ENCODE measurements at regions of chr1 and their contacts with region 1.

Region 1: DNA sequence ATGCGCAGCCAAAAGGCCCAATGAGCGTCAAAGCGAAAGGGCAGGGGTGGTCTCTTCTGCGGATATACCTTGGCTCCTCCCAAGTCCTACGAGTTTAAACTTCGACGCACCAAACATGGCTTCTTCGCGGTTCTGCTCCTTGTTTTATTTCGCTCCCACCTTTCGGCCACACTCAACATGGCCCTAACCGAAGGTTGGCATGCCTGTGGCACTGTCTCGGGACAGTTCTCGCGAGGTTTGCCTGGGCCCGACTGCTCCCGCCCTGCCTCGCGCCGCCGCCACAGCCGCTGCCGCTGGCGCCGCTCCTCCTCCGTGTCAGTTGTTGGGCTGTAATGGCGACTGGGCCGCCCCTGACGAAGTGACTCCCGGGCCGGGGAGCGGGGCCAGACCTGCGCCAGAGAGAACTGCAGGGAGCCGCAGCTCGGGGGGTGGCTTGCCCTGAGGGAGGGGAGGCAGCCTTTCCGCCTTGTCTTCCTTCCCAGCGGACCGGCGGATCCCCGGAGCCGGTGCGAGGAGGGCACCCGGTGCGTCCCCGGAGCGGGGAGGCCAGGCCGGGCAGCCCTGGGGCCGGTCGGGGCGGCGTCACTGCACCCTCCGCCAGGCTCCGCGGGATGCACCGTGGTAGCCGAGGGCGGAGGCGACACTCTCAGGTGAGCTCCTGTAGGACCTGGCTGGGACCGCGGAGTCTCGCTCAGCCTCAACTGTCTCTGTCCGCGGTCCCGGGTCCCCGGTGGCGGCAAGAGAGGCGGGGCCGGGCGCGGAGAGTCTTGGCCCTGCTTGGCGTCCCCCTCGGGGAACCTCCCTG is at the start of gene CEP350:
- DNase-seq: peak; percentile 97 to 98
- ATAC-seq: peak; percentile 93 to 94
- H3K4me3 ChIP-seq: peak within 1 kb of the TSS; percentile 75 to 97 (median 92)
- H3K27ac ChIP-seq: peak within 1 kb of the TSS; percentile 93 to 98 (median 97)
- H3K4me1 ChIP-seq: peaks cover 17 to 38% of the 10 kb centered on the region in 2 donors
- H3K27me3 ChIP-seq: no peaks in the 10 kb centered on the region
- CTCF ChIP-seq: peak in 2 of 5 experiments; percentile 13 to 19
- POLR2A ChIP-seq: peak; percentile 87 to 92
- total RNA-seq, gene CEP350: 83.7 to 197 (median 157) TPM

Region 2: DNA sequence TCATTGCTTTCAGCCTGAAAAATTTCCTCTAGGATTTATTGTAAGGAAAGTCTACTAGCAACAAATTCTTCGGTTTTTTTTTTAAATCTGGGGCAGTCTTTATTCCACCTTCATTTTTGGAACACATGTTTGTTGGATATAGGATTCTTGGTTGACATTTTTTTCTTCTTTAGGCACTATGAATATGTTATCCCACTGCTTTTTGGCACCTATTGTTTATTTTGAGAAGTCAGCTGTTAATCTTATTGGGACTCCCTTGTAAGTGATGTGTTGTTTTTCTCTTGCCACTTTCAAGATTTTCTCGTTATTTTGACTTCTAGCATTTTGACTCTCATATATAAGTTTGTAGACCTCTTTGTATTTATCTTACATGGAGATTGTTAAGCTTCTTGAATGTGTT is 478.2 kb before region 1 on chr1:
- in situ Hi-C with region 1: no loop called
- intact Hi-C with region 1: no loop called
- DNase-seq: no peak
- ATAC-seq: no peak
- H3K4me3 ChIP-seq: no peak overlapping the region
- H3K27ac ChIP-seq: no peak overlapping the region
- H3K4me1 ChIP-seq: no peaks in the 10 kb centered on the region
- H3K27me3 ChIP-seq: no peaks in the 10 kb centered on the region
- CTCF ChIP-seq: no peak
- POLR2A ChIP-seq: no peak

Region 3: DNA sequence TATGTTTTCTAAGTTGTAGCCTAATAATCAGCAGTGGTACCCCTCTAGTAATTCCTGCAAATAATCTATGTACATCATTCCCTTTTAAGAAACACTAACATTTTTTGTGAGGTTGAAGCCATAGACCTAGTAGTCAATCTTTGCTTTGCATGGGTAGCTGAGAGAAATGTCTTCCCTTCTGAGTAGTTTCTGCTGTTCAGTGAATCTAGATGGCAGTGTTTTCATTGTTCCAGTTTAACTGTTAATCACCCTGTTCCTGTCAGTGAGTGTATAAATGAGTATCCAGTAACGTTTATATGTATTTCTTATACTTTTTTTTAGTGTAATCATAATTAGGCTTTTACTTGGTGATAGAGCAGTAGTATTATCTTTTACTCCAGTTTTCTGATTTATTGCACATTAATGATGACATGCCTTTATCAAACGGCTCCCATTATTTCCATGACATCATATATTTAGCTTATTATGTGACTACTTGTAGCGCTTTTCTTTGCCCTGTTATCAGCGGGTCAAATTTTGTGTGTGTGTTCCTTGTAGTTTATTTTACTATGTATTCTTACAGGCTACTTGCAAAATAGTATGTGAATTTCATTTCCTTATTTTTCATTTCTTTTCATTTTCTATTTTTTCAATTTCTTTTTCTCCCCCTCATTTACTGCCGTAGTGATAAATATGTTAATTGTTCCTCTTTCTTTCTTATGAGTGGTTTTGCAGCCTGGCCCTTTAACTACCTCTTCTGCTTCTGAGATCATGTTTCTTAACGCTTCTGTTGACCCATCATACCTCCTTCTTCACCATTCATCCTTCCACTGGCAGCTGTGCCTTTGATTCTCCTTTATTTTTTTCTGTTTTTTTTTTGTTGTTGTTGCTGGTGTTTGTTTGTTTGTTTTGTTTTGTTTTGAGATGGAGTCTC is 18.8 kb after region 1 on chr1:
- in situ Hi-C with region 1: no loop called
- intact Hi-C with region 1: loop called (anchors 2 kb)
- DNase-seq: no peak
- ATAC-seq: no peak
- H3K4me3 ChIP-seq: peak overlapping the region in 3 of 4 donors; percentile 25 to 38 (median 30)
- H3K27ac ChIP-seq: peak overlapping the region; percentile 79 to 89 (median 87)
- H3K4me1 ChIP-seq: peaks cover 60 to 75% of the 10 kb centered on the region in 2 donors
- H3K27me3 ChIP-seq: no peaks in the 10 kb centered on the region
- CTCF ChIP-seq: no peak
- POLR2A ChIP-seq: no peak

Region 4: DNA sequence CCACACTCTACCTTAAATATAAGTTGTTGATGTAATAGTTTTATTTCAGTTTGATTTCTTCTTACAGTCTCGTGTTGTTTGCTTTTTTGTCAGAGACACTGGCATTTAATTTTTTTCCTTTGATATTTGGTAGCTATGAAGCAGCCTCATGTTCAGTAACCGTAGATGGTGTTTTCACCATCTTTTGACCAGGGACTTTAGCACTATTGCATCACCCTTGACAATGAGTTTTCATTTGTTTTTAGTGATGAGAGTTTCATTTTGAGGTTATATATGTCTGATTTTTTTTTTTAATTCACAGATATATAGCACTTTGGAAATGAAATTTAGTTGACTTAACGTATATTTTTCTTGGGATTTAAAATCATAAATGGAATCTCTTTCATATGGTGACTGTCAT is 36.2 kb after region 1 on chr1:
- in situ Hi-C with region 1: no loop called
- intact Hi-C with region 1: no loop called
- DNase-seq: no peak
- ATAC-seq: no peak
- H3K4me3 ChIP-seq: no peak overlapping the region
- H3K27ac ChIP-seq: no peak overlapping the region
- H3K4me1 ChIP-seq: no peaks in the 10 kb centered on the region
- H3K27me3 ChIP-seq: no peaks in the 10 kb centered on the region
- CTCF ChIP-seq: no peak
- POLR2A ChIP-seq: no peak

Region 5: DNA sequence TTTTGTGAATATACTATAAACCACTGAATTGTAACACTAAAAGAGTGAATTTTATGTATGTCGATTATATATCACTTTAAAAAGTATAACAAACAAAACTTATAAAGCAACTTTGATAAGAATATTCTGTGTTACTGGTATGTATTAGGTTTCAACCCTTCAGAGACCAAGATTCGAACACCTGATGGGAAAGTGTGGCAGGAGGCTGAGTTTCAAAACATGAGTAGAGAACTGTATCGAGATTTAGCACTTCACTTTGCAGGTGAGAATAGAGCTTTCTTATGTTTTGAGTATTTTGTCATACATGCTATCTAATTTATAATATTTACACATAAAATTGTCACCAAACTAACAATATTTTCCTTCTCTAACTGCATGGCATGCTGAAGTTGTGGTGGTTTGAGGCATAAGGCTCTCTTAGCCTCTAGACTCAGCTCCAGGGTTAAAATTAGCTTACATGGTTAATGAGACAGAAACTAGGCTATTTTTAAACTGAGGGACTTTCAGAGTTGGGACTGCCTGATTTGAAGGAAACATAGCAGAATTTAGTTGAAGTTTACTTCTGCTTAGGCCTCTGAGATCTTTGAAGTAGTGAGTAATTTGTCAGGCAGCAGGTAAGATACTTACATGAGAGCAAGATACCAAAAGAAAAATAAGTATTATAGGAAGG is 48.5 kb after region 1 on chr1:
- in situ Hi-C with region 1: no loop called
- intact Hi-C with region 1: no loop called
- DNase-seq: no peak
- ATAC-seq: peak in 1 of 2 donors; percentile 36
- H3K4me3 ChIP-seq: no peak overlapping the region
- H3K27ac ChIP-seq: peak overlapping the region; percentile 42 to 59 (median 48)
- H3K4me1 ChIP-seq: peaks cover 22 to 24% of the 10 kb centered on the region in 2 donors
- H3K27me3 ChIP-seq: no peaks in the 10 kb centered on the region
- CTCF ChIP-seq: no peak
- POLR2A ChIP-seq: no peak

Measured in gastrocnemius medialis (tissue), 4 donors.